H1 (cell line): ENCODE measurements at regions of chr21 and their contacts with region 1.

Region 1: GRCh38 chr21:40054403-40054802 is 187.2 kb downstream of the PCP4 start:
- DNase-seq: no peak
- H3K4me3 ChIP-seq: no peak overlapping the region
- H3K27ac ChIP-seq: no peak overlapping the region
- H3K4me1 ChIP-seq: peaks cover 0 to 3% (median 1%) of the 10 kb centered on the region in 4 experiments; a peak in 4 of 7 replicates
- H3K27me3 ChIP-seq: no peaks in the 10 kb centered on the region
- CTCF ChIP-seq: no peak
- EP300 ChIP-seq: no peak
- POLR2A ChIP-seq: no peak
- RAD21 ChIP-seq: no peak

Region 2: GRCh38 chr21:39681831-39682230 is 372.6 kb before region 1 on chr21:
- CTCF ChIA-PET with region 1: no interaction called
- POLR2A ChIA-PET with region 1: no interaction called
- DNase-seq: no peak
- H3K4me3 ChIP-seq: no peak overlapping the region
- H3K27ac ChIP-seq: no peak overlapping the region
- H3K4me1 ChIP-seq: peaks cover 0 to 3% (median 0%) of the 10 kb centered on the region in 4 experiments; a peak in 2 of 7 replicates
- H3K27me3 ChIP-seq: no peaks in the 10 kb centered on the region
- CTCF ChIP-seq: no peak
- EP300 ChIP-seq: no peak
- POLR2A ChIP-seq: no peak
- RAD21 ChIP-seq: no peak

Region 3: DNA sequence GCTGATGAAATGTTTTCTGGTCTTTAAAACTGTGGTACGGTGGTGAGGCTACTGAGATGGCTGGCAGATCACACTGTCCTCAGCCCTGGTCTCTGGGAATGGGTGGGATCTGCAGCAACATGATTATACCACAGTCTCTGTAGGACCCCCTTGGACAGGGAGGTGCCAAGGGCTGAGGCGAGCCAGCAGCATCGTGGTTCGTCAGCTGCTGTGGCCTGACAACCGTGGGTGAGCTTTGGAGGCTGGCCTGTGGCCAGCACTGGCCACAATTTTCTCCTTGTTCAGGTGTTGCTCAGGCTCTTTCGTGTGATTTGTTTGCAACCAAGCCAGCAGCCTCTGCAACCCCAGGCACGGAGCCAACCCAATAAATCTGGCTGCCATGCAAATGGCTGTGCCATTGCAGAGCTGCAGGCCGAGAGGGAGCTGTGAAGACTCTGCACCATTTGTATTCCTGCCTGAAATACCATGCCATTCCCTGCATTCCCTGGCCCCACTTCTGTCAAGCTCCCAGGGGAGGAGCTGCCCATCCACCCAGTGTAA is 116.2 kb before region 1 on chr21:
- CTCF ChIA-PET with region 1: no interaction called
- POLR2A ChIA-PET with region 1: no interaction called
- DNase-seq: no peak
- H3K4me3 ChIP-seq: no peak overlapping the region
- H3K27ac ChIP-seq: no peak overlapping the region
- H3K4me1 ChIP-seq: no peaks in the 10 kb centered on the region
- H3K27me3 ChIP-seq: no peaks in the 10 kb centered on the region
- CTCF ChIP-seq: no peak
- EP300 ChIP-seq: no peak
- POLR2A ChIP-seq: no peak
- RAD21 ChIP-seq: no peak

Region 4: GRCh38 chr21:40080385-40080784 is 26.0 kb after region 1 on chr21:
- CTCF ChIA-PET with region 1: interaction called, 10 read pairs
- POLR2A ChIA-PET with region 1: no interaction called
- DNase-seq: no peak
- H3K4me3 ChIP-seq: no peak overlapping the region
- H3K27ac ChIP-seq: no peak overlapping the region
- H3K4me1 ChIP-seq: no peaks in the 10 kb centered on the region
- H3K27me3 ChIP-seq: no peaks in the 10 kb centered on the region
- CTCF ChIP-seq: no peak
- EP300 ChIP-seq: no peak
- POLR2A ChIP-seq: no peak
- RAD21 ChIP-seq: no peak

Region 5: GRCh38 chr21:40095477-40095876 is 41.1 kb after region 1 on chr21:
- CTCF ChIA-PET with region 1: no interaction called
- POLR2A ChIA-PET with region 1: no interaction called
- DNase-seq: no peak
- H3K4me3 ChIP-seq: no peak overlapping the region
- H3K27ac ChIP-seq: no peak overlapping the region
- H3K4me1 ChIP-seq: no peaks in the 10 kb centered on the region
- H3K27me3 ChIP-seq: no peaks in the 10 kb centered on the region
- CTCF ChIP-seq: no peak
- EP300 ChIP-seq: no peak
- POLR2A ChIP-seq: no peak
- RAD21 ChIP-seq: no peak